ENCODE measurements at regions of chr20 and their contacts with region 1.

Region 1: DNA sequence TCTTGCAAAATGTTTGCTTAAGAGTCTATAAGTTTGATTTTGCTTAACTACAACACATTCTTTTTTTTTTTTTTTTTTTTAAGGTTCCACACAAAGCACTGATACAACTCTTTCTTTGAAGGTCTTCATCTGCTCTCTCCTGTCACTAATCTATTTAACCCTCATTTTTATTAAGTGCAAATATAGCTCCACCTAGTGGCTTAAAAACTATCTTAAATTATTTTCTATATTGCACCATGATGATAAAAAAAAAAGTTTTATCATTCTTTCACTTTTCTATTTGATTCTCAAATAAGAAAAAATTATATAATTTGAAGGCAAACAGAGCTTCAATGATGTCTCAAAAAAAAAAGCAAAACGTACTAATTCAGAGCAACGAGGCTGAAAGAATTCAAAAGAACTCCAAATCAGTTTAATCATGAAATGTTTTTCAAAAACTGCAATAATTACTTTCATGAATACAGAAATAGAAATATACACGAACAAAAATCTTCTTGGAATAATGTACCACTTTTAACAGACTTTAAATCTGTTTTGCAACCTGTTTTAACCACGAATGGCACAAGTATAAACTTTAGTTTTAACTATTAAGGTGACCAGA is 12.8 kb downstream of the ESF1 start:
- DNase-seq: no peak
- ATAC-seq: no peak
- H3K4me3 ChIP-seq: no peak overlapping the region
- H3K27ac ChIP-seq: no peak overlapping the region
- H3K4me1 ChIP-seq: no peaks in the 10 kb centered on the region
- H3K27me3 ChIP-seq: no peaks in the 10 kb centered on the region

Region 2: DNA sequence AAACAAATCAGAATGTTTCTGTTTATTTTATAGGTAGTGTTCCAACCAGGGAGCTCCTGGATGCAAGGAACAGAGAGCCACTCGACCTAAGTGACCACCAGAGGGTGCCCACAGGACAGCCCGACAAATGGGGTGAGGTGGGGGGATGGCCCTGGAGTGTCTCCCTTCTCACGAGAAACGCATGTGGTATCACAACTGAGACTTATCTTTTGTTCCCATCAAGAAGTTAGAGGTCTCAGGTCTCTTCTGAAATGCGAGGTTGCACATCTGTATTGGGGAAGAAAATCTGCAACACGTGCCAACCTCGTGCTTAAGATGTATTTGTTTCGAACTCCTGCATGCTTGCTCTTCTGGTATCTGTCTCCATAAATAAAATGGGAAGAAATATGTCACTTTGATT is 446.9 kb before region 1 on chr20:
- intact Hi-C with region 1: loop called in 1 of 4 experiments (anchors 10 kb)
- DNase-seq: peak in 2 of 3 donors; percentile 17 to 47
- ATAC-seq: peak in 1 of 2 donors; percentile 42
- H3K4me3 ChIP-seq: no peak overlapping the region
- H3K27ac ChIP-seq: no peak overlapping the region
- H3K4me1 ChIP-seq: no peaks in the 10 kb centered on the region
- H3K27me3 ChIP-seq: no peaks in the 10 kb centered on the region

Region 3: DNA sequence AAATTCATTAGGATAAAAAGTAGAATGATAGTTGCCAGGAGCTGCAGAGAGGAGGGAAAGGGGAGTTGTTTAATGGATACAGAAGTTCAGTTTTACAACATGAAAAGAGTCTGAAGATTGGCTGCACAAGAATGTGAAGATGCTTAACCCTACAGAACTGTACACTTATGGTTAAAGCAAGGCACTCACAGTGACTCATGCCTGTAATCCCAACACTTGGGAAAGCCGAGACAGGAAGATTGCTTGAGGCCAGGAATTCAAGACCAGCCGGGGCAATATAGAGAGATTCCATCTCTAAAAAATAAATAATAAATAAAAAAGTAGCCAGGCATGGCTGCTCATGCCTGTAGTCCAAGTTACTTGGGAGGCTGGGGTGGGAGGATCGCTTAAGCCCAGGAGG is 307.3 kb before region 1 on chr20:
- intact Hi-C with region 1: loop called in 1 of 4 experiments (anchors 10 kb)
- DNase-seq: no peak
- ATAC-seq: no peak
- H3K4me3 ChIP-seq: no peak overlapping the region
- H3K27ac ChIP-seq: no peak overlapping the region
- H3K4me1 ChIP-seq: no peaks in the 10 kb centered on the region
- H3K27me3 ChIP-seq: no peaks in the 10 kb centered on the region

Measured in right cardiac atrium (tissue), 5 donors.